ENCODE measurements at regions of chr3 and their contacts with region 1.

Region 1: DNA sequence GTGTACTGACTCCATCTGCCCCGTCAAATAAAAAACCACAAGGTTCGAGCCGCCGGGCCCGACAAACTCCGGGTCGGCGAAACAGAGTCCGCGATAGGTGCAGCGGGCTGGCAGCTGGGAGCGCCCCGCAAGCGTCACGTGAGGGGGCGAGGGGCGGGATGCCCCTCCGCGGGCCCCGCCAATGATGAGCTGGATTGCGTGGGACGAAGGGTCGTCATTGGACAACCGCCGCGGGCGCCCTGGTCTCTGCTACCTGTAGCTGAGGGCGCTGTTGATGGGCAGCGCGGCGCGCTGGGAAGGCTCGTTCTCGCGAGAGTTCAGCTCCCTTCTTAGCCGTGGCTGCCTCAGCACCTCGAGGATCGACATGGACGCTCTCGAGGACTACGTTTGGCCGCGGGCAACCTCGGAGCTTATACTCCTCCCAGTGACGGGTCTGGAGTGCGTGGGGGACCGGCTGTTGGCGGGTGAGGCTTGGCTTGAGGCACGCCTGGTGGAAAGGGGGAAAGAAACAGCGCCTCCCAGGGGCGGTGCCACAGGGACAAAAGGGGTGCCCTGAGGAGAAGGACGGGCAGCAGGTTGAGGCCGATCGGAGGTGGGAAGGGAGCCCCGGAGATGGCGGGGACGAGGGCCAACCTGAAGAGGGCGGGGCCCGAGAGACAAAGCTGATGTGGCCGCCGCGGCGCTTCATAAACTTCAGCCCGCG is at the start of gene WDR6:
- DNase-seq: peak; percentile 96
- ATAC-seq: peak; percentile 94
- H3K4me3 ChIP-seq: peak within 1 kb of the TSS; percentile 83
- H3K27ac ChIP-seq: peak within 1 kb of the TSS; percentile 89
- H3K4me1 ChIP-seq: peaks cover 16% of the 10 kb centered on the region
- H3K27me3 ChIP-seq: no peaks in the 10 kb centered on the region
- CTCF ChIP-seq: peak; percentile 41 to 48 (median 47); a peak in 5 of 6 replicates
- EP300 ChIP-seq: peak in 1 of 2 experiments; percentile 35; a peak in 1 of 4 replicates
- POLR2A ChIP-seq: peak; percentile 99
- RAD21 ChIP-seq: no peak
- polyA plus RNA-seq, gene WDR6: 21.3 to 24.1 TPM

Region 2: GRCh38 chr3:48885753-48886152 is 121.5 kb before region 1 on chr3:
- CTCF ChIA-PET with region 1: no interaction called
- POLR2A ChIA-PET with region 1: no interaction called
- RAD21 ChIA-PET with region 1: no interaction called
- SMC1A ChIA-PET with region 1: no interaction called
- in situ Hi-C with region 1: no loop called
- intact Hi-C with region 1: no loop called
- DNase-seq: no peak
- ATAC-seq: no peak
- H3K4me3 ChIP-seq: no peak overlapping the region
- H3K27ac ChIP-seq: no peak overlapping the region
- H3K4me1 ChIP-seq: no peaks in the 10 kb centered on the region
- H3K27me3 ChIP-seq: no peaks in the 10 kb centered on the region
- CTCF ChIP-seq: no peak
- EP300 ChIP-seq: no peak
- POLR2A ChIP-seq: no peak
- RAD21 ChIP-seq: no peak

Region 3: DNA sequence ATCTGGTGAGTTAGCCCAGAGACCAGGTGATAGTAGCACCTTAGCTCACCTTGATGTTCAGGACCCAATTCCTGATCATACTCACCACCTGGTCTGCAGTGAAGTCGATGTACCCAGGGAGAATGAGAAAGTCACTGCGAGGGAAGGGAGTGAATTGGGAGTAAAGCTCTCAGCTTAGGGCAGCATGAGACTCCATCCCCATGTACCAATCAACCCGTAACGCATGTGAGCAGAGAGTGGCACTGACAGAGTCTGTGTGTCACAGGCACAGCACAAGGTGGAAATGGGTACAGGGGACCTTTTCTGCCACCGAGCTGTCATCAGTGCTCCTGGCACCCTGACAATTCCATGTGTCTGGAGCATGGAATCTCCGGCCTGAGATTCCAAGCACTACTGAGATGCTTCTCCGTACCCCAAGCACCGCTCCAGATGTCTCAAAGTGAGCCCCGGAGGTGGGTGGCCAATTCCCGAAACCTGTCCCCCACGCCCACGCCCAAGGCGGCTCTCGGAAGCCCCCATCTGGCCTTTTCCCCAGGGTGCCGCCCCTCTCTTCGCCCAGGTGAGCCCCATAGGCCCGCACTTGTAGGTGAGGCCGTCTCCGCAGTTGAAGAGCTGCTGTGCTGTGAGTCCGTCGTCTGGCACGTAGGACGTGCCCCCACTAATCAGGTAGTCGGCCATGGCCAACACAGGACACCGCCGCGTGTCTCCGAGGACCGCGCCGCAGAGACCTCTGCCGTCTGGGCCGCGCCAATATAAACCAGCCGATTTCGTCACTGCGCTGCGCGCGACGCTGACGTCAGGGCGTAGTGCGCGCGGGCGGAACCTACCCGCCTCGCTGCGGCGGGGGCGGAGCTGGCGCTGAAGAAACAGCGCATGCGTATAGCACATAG is 21.7 kb after region 1 on chr3 and contains the start of gene IMPDH2:
- CTCF ChIA-PET with region 1: interaction called, 15 read pairs
- POLR2A ChIA-PET with region 1: interaction called, 10 read pairs
- RAD21 ChIA-PET with region 1: interaction called, 15 read pairs
- SMC1A ChIA-PET with region 1: interaction called, 5 read pairs
- in situ Hi-C with region 1: no loop called
- intact Hi-C with region 1: no loop called
- DNase-seq: peak; percentile 79
- ATAC-seq: peak; percentile 92
- H3K4me3 ChIP-seq: peak within 1 kb of the TSS; percentile 79
- H3K27ac ChIP-seq: peak within 1 kb of the TSS; percentile 76
- H3K4me1 ChIP-seq: peaks cover 13% of the 10 kb centered on the region
- H3K27me3 ChIP-seq: no peaks in the 10 kb centered on the region
- CTCF ChIP-seq: peak in 2 of 3 experiments; percentile 9 to 29; a peak in 1 of 6 replicates
- EP300 ChIP-seq: no peak
- POLR2A ChIP-seq: no peak
- RAD21 ChIP-seq: no peak
- polyA plus RNA-seq, gene IMPDH2: 386 to 424 TPM